HEK293 (cell line): ENCODE measurements at regions of chr1 and their contacts with region 1.

Region 1: DNA sequence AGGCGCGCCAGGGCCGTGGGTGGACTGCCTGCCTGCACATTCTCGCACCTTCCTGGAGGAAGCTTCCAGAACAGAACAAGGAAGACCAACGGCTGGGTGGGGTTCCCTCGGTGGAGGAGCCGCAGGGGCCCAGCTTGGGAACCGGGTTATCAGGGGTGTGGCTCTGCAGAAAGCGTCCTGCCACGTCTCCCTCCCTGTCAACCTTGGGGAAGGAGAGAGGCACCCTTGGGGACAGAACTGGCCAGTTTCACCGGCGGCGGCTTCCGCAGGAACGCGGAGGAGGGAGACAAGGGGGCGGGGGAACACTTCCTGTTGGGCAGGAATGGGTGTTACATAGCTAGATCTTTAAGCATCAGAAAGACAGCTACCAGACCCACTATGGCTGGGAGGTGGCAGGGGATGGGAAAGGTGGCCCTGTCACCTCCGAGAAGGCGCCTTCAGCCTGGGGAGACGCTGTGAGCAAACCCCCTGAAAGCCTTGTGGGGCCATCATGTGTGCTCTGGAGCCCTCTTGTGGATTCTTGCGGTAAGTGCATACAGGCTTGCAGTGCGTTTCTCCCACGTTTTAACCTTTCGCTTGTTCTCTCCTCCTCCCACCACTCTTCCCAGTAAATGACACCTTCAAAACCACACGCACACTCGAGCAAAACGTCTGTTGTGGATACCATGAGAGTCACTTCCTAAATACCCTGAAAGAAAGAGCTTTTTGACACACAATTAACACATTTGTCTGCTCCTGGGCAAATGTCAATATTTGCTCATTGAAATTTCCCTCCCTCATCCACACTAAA is 3.8 kb upstream of the PLEKHA6 start:
- H3K4me3 ChIP-seq: peak overlapping the region; percentile 38
- H3K27ac ChIP-seq: no peak overlapping the region
- H3K4me1 ChIP-seq: no peaks in the 10 kb centered on the region; the same call in 1 of the 2 replicates
- CTCF ChIP-seq: peak; percentile 98

Region 2: GRCh38 chr1:204162231-204163074 is 201.1 kb before region 1 on chr1:
- CTCF ChIA-PET with region 1: interaction called, 178 read pairs
- POLR2A ChIA-PET with region 1: no interaction called
- H3K4me3 ChIP-seq: no peak overlapping the region
- H3K27ac ChIP-seq: no peak overlapping the region
- H3K4me1 ChIP-seq: no peaks in the 10 kb centered on the region
- CTCF ChIP-seq: peak; percentile 95

Region 3: DNA sequence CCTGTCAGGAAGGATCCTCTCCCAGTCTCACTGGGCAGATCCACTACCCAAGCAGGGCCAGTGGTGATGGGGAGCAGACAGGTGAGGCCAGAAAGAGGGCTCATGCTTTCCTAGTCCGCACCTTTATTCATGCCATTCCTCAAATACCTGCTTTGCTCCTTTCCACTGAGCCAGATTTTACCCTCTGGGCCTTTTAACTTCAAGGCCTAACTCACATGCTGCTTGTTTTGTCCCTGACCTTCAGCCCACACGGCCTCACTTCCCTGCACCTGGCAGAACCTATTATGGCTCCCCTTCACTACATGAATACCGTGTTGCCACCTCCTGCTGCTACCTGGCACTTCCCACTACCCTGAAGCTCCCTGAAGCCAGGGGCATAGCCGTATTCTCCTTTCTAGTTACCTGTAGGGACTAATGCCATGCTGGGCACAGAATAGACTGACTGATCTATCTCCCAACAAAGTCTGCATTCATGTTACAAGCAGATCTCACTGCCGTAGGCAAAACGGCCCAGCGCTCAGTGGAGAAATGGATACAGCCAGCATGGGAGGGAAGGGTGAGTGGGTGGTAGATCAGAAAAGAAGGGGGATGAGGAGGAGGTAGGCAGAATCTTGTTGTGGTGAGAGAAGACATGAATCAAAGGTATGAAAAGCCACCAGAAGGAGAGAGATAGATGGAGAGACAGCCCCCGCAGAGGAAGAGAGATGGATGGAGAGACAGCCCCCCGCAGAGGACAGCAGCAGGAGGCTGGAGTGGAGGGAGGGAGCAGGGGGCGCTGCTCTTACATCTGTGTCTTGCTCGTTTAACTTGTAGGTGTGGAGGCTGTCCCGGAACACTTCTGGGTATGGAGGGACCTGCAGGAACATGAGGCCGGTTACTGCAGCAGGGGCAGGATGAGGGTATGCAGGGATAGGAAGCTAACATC is 113.5 kb before region 1 on chr1:
- CTCF ChIA-PET with region 1: interaction called, 164 read pairs
- POLR2A ChIA-PET with region 1: no interaction called
- H3K4me3 ChIP-seq: no peak overlapping the region
- H3K27ac ChIP-seq: no peak overlapping the region
- H3K4me1 ChIP-seq: peaks cover 4% of the 10 kb centered on the region; the same call in 1 of the 2 replicates
- CTCF ChIP-seq: no peak

Region 4: GRCh38 chr1:204280099-204280989 is 83.2 kb before region 1 on chr1:
- CTCF ChIA-PET with region 1: interaction called, 18 read pairs
- POLR2A ChIA-PET with region 1: no interaction called
- H3K4me3 ChIP-seq: no peak overlapping the region
- H3K27ac ChIP-seq: no peak overlapping the region
- H3K4me1 ChIP-seq: no peaks in the 10 kb centered on the region
- CTCF ChIP-seq: no peak

Region 5: DNA sequence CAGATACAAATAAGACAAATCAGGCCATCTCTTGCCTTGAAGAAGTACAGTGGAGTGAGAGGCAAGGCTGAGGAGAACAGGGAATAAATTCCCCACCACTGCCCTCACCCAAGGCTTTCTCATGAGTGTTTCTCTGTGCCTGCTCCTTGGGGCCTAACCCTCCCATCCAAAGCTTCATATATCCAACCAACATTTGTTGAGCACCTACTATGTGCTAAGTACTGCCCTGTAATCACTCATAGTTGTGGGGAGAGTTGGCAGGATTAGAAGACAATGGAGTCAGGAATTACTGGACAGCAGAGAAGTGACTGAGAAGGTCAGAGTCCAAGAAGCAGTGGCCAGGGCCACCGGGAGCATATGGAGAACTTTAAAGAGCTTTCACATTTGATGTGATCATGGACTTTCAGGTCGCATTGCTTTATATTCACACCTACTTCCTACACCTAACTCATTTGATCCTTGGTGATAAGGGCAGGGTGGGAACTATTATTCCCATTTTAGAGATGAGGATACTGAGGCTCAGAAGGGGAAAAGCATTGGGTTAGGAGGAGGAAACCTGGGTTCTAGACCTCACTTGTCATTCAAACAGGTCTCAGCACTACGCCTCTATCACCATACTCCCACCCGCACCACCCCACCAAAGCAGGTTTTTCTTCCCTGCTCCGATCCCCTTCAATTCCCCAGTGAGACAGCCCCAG is 10.2 kb before region 1 on chr1:
- CTCF ChIA-PET with region 1: interaction called, 24 read pairs
- POLR2A ChIA-PET with region 1: no interaction called
- H3K4me3 ChIP-seq: no peak overlapping the region
- H3K27ac ChIP-seq: no peak overlapping the region
- H3K4me1 ChIP-seq: no peaks in the 10 kb centered on the region; the same call in 1 of the 2 replicates
- CTCF ChIP-seq: no peak

Region 6: DNA sequence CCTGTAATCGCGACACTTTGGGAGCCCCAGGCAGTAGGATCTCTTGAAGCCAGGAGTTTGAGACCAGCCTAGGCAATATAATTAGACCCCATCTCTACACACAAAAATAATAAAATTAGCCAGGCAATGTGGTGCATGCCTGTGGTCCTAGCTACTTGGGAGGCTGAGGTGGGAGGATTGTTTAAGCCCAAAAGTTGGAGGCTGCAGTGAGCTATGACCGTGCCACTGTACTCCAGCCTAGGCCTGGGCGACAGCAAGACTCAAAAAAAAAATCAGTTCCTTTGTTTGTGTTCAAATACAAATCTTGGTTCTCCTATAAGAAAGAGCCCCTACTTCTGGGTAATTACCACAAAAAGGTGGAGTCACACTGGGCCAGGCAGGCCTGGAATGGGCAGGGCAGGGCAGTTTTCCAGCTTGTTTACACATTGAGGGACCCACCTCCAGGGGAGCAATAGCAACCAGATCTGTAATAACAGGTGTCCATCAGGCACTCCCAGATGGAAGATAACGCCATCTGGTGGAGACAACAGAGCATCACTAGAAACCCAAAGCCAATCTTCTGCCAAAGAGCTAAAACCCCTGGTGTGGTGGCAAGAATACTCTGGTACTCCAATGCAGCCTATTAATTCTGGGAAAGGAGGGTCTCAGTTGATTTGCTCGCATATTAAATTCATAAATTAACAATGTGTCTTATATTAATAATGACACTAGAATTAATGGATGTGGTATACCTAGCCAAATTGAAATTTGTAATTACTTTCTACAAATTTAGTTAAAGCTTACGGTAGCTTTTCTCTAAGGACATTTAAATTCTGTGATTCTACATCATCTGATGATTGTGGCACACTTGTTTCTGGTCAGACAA is 34.9 kb after region 1 on chr1:
- CTCF ChIA-PET with region 1: interaction called, 23 read pairs
- POLR2A ChIA-PET with region 1: interaction called, 4 read pairs
- H3K4me3 ChIP-seq: no peak overlapping the region
- H3K27ac ChIP-seq: no peak overlapping the region
- H3K4me1 ChIP-seq: no peaks in the 10 kb centered on the region
- CTCF ChIP-seq: peak; percentile 90